Activated naive CD4-positive, alpha-beta T cell treated with anti-CD3 and anti-CD28 coated beads for 36 hours (primary cell): ENCODE measurements at regions of chr2 and their contacts with region 1.

Region 1: GRCh38 chr2:217223222-217223930 is 363.5 kb upstream of the TNP1 start:
- DNase-seq: peak; percentile 78
- H3K4me3 Mint-ChIP-seq: no peak overlapping the region
- H3K27ac Mint-ChIP-seq: peak overlapping the region; percentile 59
- H3K4me1 Mint-ChIP-seq: peaks cover 29% of the 10 kb centered on the region
- H3K27me3 Mint-ChIP-seq: peaks cover 28% of the 10 kb centered on the region

Region 2: DNA sequence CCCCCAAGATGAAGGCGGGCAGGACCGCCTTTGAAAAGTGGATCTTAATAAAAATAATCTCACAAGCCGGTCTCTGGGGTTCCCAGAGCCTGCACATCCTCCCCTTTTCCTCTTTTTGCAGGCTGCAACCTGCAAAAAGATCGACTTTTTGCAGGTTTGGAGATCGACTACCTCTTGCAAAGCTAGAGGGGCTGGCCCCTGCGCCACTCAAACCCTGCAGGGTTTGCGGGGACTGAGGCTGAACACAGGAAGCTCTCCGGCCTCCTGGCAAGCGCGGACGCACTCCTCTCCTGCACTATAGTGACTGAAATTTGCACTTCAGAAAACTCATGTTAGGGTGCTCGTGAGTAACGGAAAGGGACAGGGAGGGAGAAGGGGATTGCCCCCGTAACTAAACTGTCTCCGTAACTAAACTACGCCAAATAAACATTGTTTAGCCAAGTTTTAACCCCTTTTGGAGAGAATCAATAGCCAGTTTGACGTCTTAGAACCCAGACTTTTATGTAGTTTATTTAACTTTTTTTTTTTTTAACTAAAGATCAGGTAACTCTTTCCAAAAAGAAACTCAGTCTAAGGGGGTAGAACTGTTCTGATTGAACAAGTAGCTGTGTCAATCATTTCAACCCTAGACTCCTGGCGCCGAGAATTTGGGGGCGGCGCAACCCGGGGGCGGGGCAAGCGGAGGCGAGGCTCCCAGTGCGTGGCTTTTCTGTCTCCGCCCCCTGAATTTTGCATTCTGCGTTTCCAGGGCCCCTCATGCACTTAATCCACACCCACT is 530.6 kb before region 1 on chr2:
- CTCF ChIA-PET with region 1: no interaction called
- intact Hi-C with region 1: loop called (anchors 1 kb)
- DNase-seq: peak; percentile 77
- H3K4me3 Mint-ChIP-seq: peak overlapping the region; percentile 74
- H3K27ac Mint-ChIP-seq: peak overlapping the region; percentile 43
- H3K4me1 Mint-ChIP-seq: peaks cover 29% of the 10 kb centered on the region
- H3K27me3 Mint-ChIP-seq: peaks cover 69% of the 10 kb centered on the region

Region 3: DNA sequence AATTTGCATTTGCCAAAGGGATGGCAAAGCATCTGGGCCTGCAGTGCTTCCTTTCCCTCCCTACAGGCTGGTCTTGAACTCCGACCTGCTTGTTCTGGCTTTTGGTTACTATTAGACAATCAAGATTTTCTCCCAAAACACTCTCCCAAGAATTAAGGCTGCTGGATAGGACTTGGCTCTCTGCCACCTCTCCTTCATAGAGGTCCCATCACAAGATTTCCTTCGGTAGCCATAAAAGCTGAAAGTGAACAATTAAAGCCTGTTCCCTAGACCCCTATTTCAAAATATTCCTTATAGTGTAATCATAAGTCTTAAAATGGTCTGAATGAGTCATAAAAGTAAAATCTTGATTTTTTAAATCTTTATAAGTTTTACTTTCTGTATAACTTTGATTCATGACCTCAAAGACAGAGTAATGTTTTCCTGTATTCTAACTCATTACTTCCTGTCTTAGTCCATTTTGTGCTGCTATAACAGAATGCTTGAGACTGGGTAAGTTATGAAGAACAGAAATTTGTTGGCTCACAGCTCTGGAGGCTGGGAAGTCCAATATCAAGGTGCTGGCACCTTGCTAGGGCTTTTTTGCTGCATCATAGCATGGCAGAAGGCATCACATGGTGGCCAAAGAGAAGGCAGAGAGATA is 325.7 kb before region 1 on chr2:
- CTCF ChIA-PET with region 1: no interaction called
- intact Hi-C with region 1: loop called (anchors 2 kb)
- DNase-seq: no peak
- H3K4me3 Mint-ChIP-seq: no peak overlapping the region
- H3K27ac Mint-ChIP-seq: no peak overlapping the region
- H3K4me1 Mint-ChIP-seq: peaks cover 5% of the 10 kb centered on the region
- H3K27me3 Mint-ChIP-seq: no peaks in the 10 kb centered on the region

Region 4: GRCh38 chr2:216936954-216937357 is 286.4 kb before region 1 on chr2:
- CTCF ChIA-PET with region 1: no interaction called
- intact Hi-C with region 1: no loop called
- DNase-seq: no peak
- H3K4me3 Mint-ChIP-seq: no peak overlapping the region
- H3K27ac Mint-ChIP-seq: no peak overlapping the region
- H3K4me1 Mint-ChIP-seq: no peaks in the 10 kb centered on the region
- H3K27me3 Mint-ChIP-seq: no peaks in the 10 kb centered on the region

Region 5: DNA sequence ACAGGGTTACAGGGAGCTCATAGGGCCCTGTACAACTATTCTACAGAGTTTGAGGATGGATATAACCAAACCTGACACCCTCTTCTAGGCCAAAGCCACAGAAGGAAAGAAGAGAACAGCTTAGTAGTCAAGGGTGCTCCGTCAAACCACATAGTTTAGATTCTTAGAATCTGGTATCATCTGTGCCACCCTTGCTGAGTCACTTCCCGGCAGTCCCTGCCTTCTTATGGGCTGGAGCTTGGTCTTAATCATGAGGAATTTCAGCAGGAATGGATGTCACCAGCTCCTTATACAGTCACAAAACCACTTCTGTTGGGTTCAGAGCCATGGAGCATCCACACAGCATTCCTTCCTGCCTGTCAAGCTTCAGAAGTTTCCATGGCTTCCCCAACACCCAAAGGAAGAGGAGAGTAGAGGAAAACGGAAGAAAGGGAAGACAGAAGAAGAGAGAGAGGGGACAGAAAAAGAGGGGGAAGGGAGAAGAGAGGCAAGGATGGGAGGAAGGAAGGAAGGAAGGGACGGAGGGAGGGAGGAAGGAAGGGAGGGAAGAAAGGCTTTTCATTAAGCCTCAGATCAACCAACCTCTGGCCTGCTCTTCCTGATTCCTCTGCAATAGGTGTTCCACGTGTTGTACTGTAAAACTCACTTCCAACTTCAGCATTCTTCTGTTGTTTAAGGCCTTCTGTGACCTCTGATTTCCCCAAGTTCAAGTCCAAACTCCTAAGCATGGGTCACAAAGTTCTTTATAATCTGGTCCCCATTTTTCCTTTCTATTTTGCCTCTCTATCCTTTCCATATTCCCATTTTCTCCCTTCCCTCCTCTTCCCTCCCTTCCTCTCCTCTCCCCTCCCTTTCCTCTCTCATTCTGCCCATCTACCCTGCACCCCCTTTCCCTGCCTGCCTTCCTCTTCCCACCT is 117.4 kb before region 1 on chr2:
- CTCF ChIA-PET with region 1: no interaction called
- intact Hi-C with region 1: loop called (anchors 5 kb)
- DNase-seq: peak; percentile 27
- H3K4me3 Mint-ChIP-seq: no peak overlapping the region
- H3K27ac Mint-ChIP-seq: no peak overlapping the region
- H3K4me1 Mint-ChIP-seq: no peaks in the 10 kb centered on the region
- H3K27me3 Mint-ChIP-seq: peaks cover 11% of the 10 kb centered on the region

Region 6: DNA sequence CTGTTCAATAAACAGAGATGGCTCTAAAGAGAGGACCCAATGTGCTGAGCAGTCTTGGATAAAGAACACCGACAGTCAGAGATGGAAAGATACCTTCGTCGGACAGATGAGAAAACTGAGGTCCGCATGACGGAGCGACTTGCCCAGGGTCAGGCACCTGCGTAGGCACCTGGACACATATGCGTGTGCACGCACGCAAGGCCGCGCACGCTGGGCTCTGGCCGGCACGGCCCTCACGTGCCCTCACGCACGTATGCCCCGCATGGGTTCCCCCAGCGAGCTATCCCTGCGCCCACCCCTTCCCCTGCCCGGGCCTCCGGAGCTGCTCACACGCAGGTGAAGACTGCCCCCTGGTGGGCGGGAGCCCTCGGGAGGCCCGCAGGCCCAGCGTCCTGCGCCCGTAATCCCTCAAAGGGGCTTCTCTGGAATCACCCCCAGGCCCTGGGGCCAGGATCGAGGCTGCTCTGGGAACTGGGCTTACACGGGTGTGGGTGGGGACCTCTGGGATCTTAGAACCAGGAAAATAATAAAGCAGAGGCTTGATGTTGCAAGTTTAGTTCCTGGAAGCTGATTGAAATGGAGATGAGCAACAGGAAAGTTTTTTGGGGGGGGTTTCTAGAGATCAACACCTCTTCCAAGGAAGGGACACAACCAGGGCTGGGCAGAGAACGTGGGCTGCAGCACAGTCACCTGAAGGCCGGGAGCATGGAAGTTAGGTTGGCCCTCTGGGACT is 533.2 kb after region 1 on chr2:
- CTCF ChIA-PET with region 1: no interaction called
- intact Hi-C with region 1: loop called (anchors 10 kb)
- DNase-seq: peak; percentile 79
- H3K4me3 Mint-ChIP-seq: peak overlapping the region; percentile 54
- H3K27ac Mint-ChIP-seq: peak overlapping the region; percentile 19
- H3K4me1 Mint-ChIP-seq: peaks cover 23% of the 10 kb centered on the region
- H3K27me3 Mint-ChIP-seq: peaks cover 2% of the 10 kb centered on the region